Dendritic cell treated with granulocyte-macrophage colony-stimulating factor and Interleukin-4, amounts not matched to agents 40 ng/mL and 50 ng/mL, for 4 days (primary cell): ENCODE measurements at regions of chr7 and their contacts with region 1.

Region 1: GRCh38 chr7:133853706-133854276 is 273.3 kb upstream of the LRGUK start:
- H3K4me3 Mint-ChIP-seq: no peak overlapping the region
- H3K27ac Mint-ChIP-seq: no peak overlapping the region
- H3K4me1 Mint-ChIP-seq: no peaks in the 10 kb centered on the region
- H3K27me3 Mint-ChIP-seq: no peaks in the 10 kb centered on the region

Region 2: DNA sequence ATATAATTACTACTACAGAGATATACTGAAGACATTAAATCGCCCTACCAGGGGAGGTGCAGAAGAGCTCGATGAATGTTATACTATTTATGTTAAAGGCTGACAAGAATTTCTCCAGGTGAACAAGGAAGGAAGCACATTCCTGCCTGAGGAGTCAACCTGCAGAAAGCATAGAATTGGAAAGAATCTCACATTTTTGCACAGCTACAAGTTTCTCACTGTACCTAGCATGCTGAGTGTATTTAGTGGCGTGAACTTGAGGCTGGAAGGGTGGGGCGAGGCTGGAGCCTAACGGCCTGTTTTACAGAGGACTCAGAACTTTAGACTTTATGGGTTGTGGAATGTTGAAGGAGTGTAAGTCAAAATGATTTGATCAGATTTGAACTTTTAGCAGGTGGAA is 100.3 kb before region 1 on chr7:
- intact Hi-C with region 1: no loop called
- H3K4me3 Mint-ChIP-seq: no peak overlapping the region
- H3K27ac Mint-ChIP-seq: no peak overlapping the region
- H3K4me1 Mint-ChIP-seq: no peaks in the 10 kb centered on the region
- H3K27me3 Mint-ChIP-seq: no peaks in the 10 kb centered on the region

Region 3: GRCh38 chr7:134140889-134141867 is 287.4 kb after region 1 on chr7:
- intact Hi-C with region 1: loop called (anchors 10 kb)
- H3K4me3 Mint-ChIP-seq: no peak overlapping the region
- H3K27ac Mint-ChIP-seq: no peak overlapping the region
- H3K4me1 Mint-ChIP-seq: no peaks in the 10 kb centered on the region
- H3K27me3 Mint-ChIP-seq: peaks cover 3% of the 10 kb centered on the region